ENCODE measurements at regions of chr17 and their contacts with region 1.

Region 1: GRCh38 chr17:17401271-17401781 is 75.5 kb upstream of the MED9 start:
- DNase-seq: peak; percentile 30 to 55 (median 45)
- ATAC-seq: peak; percentile 93
- H3K4me3 ChIP-seq: no peak overlapping the region
- H3K27ac ChIP-seq: no peak overlapping the region
- H3K4me1 ChIP-seq: no peaks in the 10 kb centered on the region; a peak in 3 of 5 replicates
- H3K27me3 ChIP-seq: peaks cover 14 to 74% of the 10 kb centered on the region in 2 experiments
- CTCF ChIP-seq: peak; percentile 55 to 58 (median 57)
- EP300 ChIP-seq: no peak
- POLR2A ChIP-seq: no peak
- RAD21 ChIP-seq: peak in 1 of 2 experiments; percentile 43; a peak in 2 of 4 replicates

Region 2: DNA sequence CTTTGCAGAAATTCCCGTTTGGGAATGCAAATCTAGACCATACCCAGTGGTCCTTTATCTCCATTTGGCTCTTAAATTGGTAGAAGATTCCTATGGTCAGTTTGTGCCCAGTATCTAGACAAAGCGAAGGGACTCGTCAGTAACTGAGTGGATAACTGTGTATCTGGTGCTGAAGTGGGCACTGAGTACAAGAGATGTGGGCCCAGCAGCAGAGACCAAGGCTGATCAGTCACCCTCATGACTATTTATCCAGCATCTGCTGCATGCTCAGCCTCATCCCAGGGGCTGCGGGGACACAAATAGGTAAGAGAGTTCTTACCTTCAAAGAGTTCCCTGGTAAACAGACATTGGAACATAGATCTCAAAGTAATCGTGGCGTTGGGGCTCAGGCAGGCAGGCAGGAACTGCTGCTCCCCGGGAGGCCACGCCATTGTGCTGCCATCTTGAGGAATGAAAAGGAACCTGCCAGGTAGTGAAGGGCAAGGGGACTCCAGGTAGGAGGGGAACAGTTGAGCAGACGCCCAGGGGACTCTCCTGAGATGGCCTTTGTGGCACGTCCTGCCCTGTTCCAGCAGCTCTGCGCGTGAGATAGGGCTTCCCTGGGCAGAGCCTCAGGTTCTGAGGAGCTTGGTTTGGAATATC is 87.9 kb before region 1 on chr17:
- CTCF ChIA-PET with region 1: no interaction called
- POLR2A ChIA-PET with region 1: no interaction called
- in situ Hi-C with region 1: no loop called
- intact Hi-C with region 1: no loop called
- DNase-seq: peak; percentile 30 to 65 (median 44)
- ATAC-seq: peak; percentile 90
- H3K4me3 ChIP-seq: no peak overlapping the region
- H3K27ac ChIP-seq: no peak overlapping the region
- H3K4me1 ChIP-seq: peaks cover 0 to 2% of the 10 kb centered on the region in 2 experiments; a peak in 1 of 5 replicates
- H3K27me3 ChIP-seq: no peaks in the 10 kb centered on the region
- CTCF ChIP-seq: peak; percentile 57 to 68 (median 62)
- EP300 ChIP-seq: no peak
- POLR2A ChIP-seq: no peak
- RAD21 ChIP-seq: peak; percentile 37 to 58

Region 3: DNA sequence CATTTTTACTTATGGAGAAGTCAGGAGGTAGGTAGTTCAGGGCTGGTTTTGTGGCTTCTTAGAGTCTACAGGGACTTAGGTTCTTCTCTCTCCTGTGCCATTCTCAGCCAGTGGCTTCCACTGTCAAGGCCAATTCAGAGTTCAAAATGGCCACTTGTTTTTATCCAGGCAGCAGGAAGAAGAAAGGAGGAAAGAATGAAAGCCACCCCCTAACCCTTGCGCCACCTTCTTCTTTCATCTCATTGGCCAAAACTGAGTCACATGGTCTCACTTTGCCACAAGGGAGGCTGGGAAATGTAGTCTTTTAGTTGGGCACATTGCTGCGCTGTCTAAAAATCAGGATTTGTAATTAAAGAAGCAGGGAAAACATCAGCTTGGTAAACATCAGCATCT is 14.7 kb after region 1 on chr17:
- CTCF ChIA-PET with region 1: no interaction called
- POLR2A ChIA-PET with region 1: no interaction called
- in situ Hi-C with region 1: no loop called
- intact Hi-C with region 1: loop called (anchors 1 kb)
- DNase-seq: peak; percentile 77 to 85 (median 84)
- ATAC-seq: peak; percentile 89
- H3K4me3 ChIP-seq: no peak overlapping the region
- H3K27ac ChIP-seq: peak overlapping the region; percentile 67
- H3K4me1 ChIP-seq: peaks cover 14 to 41% of the 10 kb centered on the region in 2 experiments; a peak in 4 of 5 replicates
- H3K27me3 ChIP-seq: peaks cover 0 to 4% of the 10 kb centered on the region in 2 experiments; a peak in 1 of 5 replicates
- CTCF ChIP-seq: no peak
- EP300 ChIP-seq: no peak
- POLR2A ChIP-seq: no peak
- RAD21 ChIP-seq: no peak